ENCODE measurements at regions of chr1 and their contacts with region 1.

Region 1: DNA sequence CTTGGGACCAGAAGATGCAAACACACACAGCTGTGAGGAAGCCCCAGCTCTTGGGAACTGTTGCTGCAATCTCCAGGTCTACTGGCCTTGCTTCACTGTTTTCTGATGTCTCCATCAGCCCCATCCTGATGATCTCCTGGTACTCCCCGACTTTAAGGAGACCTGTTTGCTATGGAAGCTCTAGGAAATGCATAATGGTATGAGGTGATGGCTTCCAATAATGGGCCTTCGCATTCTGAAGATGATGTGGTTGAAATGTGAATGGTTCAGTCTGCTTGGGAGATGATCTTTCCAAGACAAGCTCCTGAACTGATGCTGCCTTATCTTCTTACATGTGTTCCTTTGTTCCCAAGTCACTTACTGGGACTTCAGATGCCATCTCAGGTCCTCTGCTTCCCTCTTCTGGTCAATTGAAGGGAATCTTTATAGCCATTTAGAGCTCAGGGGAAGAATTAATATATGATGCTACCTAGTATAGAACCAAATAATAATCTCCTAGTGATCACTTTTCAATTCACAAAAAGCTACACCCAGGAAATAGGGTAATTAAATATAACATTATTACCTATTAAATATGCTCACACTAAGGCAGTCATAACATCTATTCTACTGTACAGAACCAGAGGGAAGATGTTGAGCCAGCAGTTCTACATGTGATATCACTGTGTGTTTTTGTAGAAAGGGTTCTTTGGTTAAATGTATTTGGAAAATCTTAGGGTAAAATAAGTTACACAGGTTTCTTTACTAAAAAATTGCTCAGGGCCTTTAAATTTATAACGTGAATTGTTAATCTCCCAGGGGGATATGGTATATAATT is 73.9 kb upstream of the VTCN1 start:
- DNase-seq: peak in 1 of 4 donors; percentile 19
- ATAC-seq: peak; percentile 87
- H3K4me3 ChIP-seq: no peak overlapping the region
- H3K27ac ChIP-seq: no peak overlapping the region
- H3K4me1 ChIP-seq: no peaks in the 10 kb centered on the region
- H3K27me3 ChIP-seq: no peaks in the 10 kb centered on the region
- CTCF ChIP-seq: peak; percentile 38 to 89 (median 82)
- POLR2A ChIP-seq: no peak

Region 2: DNA sequence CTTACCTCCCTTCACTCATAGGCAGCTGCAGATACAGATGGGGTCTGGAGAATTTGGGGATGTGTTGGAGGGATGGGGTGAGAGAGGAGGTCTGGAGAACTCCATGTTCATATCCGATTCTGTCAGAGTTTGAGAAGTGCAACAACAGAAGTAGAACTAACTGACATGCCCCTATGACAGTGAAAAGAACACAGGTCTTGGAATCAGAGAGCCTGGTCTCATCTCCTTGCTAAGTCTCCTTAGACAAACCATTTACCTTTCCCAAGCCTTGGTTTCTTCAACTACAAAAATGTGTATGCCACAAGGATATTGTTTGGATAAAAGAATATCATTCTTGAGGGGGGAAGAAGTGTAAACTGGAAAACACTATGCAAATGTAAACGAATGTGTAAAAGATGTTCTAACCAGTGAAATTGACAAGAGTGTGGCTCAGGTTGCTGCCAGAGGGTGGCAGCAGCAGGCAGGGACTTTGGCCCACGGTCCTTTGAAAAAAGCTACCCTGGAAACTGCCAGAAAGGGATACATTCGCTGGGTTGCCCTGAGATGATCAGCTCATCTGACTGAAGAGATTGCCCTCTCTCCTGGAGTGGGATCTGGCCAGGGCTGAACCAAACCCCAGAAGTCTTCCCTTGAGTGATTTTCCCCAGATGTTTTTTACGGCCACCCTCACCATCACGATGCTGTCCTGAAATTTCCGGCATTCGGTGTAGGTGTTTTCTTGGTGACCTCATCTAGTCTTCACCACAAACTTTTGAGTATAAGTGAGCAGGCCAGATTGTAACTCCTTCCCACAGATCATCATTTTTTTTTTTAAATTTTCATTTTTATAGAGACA is 547.4 kb before region 1 on chr1:
- intact Hi-C with region 1: loop called (anchors 10 kb)
- DNase-seq: peak; percentile 65 to 68 (median 65)
- ATAC-seq: peak; percentile 84
- H3K4me3 ChIP-seq: no peak overlapping the region
- H3K27ac ChIP-seq: no peak overlapping the region
- H3K4me1 ChIP-seq: no peaks in the 10 kb centered on the region
- H3K27me3 ChIP-seq: no peaks in the 10 kb centered on the region
- CTCF ChIP-seq: peak; percentile 55 to 87 (median 83)
- POLR2A ChIP-seq: no peak

Region 3: DNA sequence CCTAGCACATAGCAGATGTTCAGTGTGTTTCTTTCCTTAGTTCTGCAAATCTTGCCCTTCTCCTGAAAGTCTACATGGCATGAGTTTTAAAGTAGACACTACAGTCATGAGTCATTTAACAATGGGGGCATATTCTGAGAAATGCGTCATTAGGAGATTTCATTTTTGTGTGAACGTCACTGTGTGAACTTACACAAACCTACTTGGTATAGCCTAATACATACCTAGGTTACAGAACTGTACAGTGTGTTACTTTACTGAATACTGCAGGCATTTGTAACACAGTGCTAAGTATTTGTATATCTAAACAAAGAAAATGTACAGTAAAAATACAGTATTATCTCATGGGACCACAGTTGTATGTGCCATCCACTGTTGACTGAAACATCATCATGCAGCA is 214.5 kb before region 1 on chr1:
- intact Hi-C with region 1: loop called (anchors 5 kb)
- DNase-seq: no peak
- ATAC-seq: no peak
- H3K4me3 ChIP-seq: no peak overlapping the region
- H3K27ac ChIP-seq: no peak overlapping the region
- H3K4me1 ChIP-seq: no peaks in the 10 kb centered on the region
- H3K27me3 ChIP-seq: no peaks in the 10 kb centered on the region
- CTCF ChIP-seq: no peak
- POLR2A ChIP-seq: no peak

Region 4: DNA sequence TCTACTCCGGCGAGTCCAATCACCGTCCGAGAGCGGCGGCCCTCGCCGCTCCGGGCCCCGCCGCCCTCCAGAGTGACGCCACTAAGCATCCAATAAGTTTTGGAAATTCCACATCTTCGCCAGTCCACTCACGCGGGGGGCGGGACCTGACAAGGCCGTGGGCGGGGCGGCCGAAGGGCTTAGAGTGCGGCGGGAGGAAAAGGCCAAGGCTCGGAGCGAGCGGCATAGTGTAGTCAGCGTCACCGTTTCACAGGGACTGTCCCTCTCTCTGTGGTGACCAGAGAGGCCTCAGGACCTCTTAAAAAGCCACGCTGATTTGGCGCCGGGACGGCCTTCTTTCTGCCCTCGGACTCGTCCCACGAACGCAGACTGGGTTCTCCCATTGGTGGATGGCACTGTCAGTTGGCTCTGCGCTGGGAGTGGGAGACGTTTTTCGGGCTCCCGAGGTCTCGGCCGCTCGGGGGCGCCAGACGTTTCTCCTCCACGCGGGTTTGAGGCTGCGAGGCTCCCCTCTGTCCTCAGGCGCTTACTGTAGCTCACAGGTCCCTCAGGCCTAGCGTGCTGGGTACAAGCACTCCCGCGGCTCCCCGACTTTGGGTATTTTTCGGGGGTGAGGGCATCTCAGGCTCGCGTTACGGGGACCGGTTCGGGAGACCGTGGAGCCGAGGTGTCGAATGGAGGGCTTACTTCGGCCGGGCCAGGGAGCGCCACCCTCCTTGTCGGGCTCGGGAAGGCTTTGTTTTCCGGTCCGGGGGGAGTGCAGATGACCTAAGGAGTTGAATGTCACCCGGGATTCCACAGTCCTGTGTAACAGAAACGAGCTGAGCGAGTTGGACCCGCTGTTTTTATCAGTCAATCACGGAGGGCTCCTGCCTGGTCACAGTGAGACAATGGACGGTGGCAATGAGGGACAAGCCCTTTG is 162.6 kb before region 1 on chr1:
- intact Hi-C with region 1: loop called (anchors 10 kb)
- DNase-seq: peak; percentile 96 to 97 (median 97)
- ATAC-seq: peak; percentile 95
- H3K4me3 ChIP-seq: peak overlapping the region; percentile 35 to 62
- H3K27ac ChIP-seq: peak overlapping the region; percentile 77 to 94 (median 92)
- H3K4me1 ChIP-seq: peaks cover 27% of the 10 kb centered on the region
- H3K27me3 ChIP-seq: no peaks in the 10 kb centered on the region
- CTCF ChIP-seq: peak; percentile 63 to 89 (median 84)
- POLR2A ChIP-seq: peak; percentile 35 to 76 (median 68)

Region 5: GRCh38 chr1:117205368-117205767 is 79.2 kb before region 1 on chr1:
- intact Hi-C with region 1: no loop called
- DNase-seq: no peak
- ATAC-seq: no peak
- H3K4me3 ChIP-seq: no peak overlapping the region
- H3K27ac ChIP-seq: no peak overlapping the region
- H3K4me1 ChIP-seq: no peaks in the 10 kb centered on the region
- H3K27me3 ChIP-seq: no peaks in the 10 kb centered on the region
- CTCF ChIP-seq: no peak
- POLR2A ChIP-seq: no peak

Region 6: GRCh38 chr1:117481410-117481809 is 196.8 kb after region 1 on chr1:
- intact Hi-C with region 1: no loop called
- DNase-seq: no peak
- ATAC-seq: no peak
- H3K4me3 ChIP-seq: no peak overlapping the region
- H3K27ac ChIP-seq: no peak overlapping the region
- H3K4me1 ChIP-seq: no peaks in the 10 kb centered on the region
- H3K27me3 ChIP-seq: no peaks in the 10 kb centered on the region
- CTCF ChIP-seq: no peak
- POLR2A ChIP-seq: no peak